ENCODE measurements at regions of chr5 and their contacts with region 1.

Region 1: GRCh38 chr5:138178516-138179276 is at the starts of genes BRD8 and KIF20A:
- DNase-seq: peak; percentile 91 to 94
- H3K4me3 ChIP-seq: peak within 1 kb of the TSS; percentile 83
- H3K27ac ChIP-seq: peak within 1 kb of the TSS; percentile 45
- H3K4me1 ChIP-seq: peaks cover 19% of the 10 kb centered on the region
- H3K27me3 ChIP-seq: no peaks in the 10 kb centered on the region
- CTCF ChIP-seq: no peak
- total RNA-seq, gene BRD8: 126 and 171 TPM in 2 replicates
- total RNA-seq, gene KIF20A: 63.6 and 88.6 TPM in 2 replicates

Region 2: DNA sequence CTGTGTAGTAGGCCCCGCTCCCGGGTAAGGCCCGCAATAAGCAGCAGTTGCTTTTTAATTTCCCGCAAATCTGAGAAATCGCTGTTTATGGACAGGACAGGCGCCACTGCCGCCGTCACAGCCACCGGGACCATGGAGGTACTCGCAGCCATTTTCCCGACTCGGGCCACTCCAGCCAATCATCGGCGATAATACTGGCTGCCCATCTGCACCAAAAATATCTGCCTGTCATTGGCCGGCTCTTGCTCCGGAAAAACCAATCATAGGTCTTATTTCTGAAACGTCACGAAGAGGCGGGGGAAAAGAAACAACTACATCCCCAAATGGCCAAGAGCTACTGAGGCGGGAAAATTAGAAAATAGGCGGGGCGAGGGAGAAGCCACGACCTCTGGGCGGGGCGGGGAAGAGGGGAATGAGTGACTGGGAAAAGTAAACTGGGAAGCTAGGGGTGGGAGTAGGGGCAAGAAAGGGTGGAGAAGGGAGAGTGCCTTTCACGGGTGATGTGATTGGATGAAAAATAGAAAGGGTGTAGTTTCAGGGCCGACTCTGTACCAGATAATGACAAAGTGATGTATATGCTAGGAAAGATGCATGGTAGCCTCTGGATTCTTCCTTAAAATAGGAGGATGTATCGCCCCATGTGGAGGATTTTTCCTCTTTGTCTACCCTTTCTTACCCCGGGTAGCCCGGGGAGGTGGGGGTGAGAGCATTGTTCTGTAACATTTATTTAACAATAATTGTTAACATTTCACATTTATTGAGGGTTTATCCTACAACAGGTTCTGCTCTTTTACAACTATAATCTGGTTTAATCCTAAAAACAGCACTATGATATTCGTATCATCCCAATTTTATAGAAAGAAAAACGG is 34.7 kb after region 1 on chr5 and contains the start of gene CDC23:
- CTCF ChIA-PET with region 1: no interaction called
- POLR2A ChIA-PET with region 1: interaction called, 5 read pairs
- intact Hi-C with region 1: loop called (anchors 2 kb)
- DNase-seq: peak; percentile 93 to 97
- H3K4me3 ChIP-seq: peak within 1 kb of the TSS; percentile 93
- H3K27ac ChIP-seq: no peak within 1 kb of the TSS
- H3K4me1 ChIP-seq: peaks cover 8% of the 10 kb centered on the region
- H3K27me3 ChIP-seq: no peaks in the 10 kb centered on the region
- CTCF ChIP-seq: no peak
- total RNA-seq, gene CDC23: 40.5 and 42.4 TPM in 2 replicates

Region 3: GRCh38 chr5:138229387-138229786 is 50.7 kb after region 1 on chr5:
- CTCF ChIA-PET with region 1: no interaction called
- POLR2A ChIA-PET with region 1: interaction called, 16 read pairs
- intact Hi-C with region 1: no loop called
- DNase-seq: no peak
- H3K4me3 ChIP-seq: no peak overlapping the region
- H3K27ac ChIP-seq: no peak overlapping the region
- H3K4me1 ChIP-seq: no peaks in the 10 kb centered on the region
- H3K27me3 ChIP-seq: no peaks in the 10 kb centered on the region
- CTCF ChIP-seq: no peak

Region 4: DNA sequence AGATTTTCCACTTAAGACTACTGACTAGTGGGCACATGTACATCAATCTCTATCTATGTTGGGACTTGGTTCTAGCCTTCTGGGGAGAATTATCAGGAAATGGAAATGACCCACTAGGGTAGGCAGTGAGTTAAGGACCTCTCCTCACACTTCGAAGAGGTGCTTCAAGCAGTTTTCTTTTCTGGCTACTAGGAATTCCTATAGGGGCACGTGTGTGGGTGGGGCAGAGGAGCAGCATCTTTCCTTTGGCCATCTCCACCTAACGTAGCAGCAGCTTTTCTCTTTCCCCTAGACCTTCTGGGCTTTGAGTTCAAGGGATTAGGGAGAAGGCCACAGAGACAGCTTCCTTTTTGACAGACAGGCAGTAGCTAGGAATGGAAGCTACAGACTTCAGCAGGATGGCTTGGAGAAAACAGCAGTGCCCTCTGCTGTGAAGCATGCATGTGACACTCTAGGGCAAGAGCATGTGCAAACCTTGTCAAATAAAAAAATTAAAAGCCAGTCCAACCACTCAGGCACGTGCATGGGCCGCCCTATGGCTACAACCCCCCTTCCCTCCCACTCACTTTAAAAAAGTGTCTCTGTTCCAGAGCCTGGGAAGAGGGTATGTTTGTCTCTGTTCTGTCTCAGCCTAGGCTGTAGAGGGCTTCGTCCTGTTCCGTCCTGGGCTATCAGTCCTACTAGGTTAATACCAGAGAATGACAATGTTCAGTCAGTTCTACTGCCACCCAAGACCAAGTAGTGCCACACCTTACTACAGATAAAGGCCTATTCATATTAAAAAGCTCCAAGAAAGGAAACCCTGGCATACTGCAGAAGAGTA is 104.4 kb after region 1 on chr5:
- CTCF ChIA-PET with region 1: no interaction called
- POLR2A ChIA-PET with region 1: no interaction called
- intact Hi-C with region 1: loop called (anchors 1 kb)
- DNase-seq: peak; percentile 43 to 50
- H3K4me3 ChIP-seq: no peak overlapping the region
- H3K27ac ChIP-seq: no peak overlapping the region
- H3K4me1 ChIP-seq: no peaks in the 10 kb centered on the region
- H3K27me3 ChIP-seq: no peaks in the 10 kb centered on the region
- CTCF ChIP-seq: peak; percentile 66

Region 5: DNA sequence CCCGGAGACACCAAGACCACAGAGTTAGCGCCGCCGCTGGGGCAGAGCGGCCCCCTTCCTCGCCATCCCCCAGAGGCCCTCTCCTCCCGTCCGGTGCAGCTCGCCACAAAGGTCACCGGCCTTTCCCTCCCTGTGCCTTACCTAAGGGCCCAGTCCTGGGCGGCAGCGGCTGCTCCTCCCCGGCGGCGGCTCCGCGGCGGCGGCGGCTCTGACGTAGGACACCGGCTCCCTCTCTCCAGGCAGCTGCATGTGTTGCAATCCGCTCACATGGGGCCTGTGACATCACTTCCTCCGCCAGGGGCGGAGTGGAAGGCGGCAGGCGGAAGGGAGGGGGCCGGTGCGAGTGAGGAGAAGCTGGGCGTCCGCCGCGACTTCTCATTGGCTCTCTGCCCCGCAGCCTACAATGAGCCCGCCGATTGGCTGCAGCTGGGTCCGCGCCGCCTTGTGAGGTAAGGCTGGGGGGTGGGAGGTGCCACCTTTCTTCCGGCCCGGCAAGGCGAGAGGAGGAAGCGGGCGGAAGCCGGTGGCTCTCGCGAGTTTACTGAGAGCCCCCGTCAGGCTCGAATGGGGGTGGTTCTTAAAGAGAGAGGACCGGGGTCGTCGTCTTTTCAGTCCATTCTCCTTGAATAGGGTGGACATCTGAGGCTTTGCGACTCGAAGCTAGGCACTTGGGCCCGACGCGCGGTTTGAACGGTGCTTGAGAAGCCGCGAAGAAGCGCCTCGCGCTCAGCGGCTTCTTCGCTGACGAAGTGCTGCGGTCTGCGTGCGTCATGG is 364.4 kb after region 1 on chr5 and contains the start of gene ETF1:
- CTCF ChIA-PET with region 1: no interaction called
- POLR2A ChIA-PET with region 1: no interaction called
- intact Hi-C with region 1: loop called (anchors 10 kb)
- DNase-seq: peak; percentile 96 to 99
- H3K4me3 ChIP-seq: peak within 1 kb of the TSS; percentile 66
- H3K27ac ChIP-seq: peak within 1 kb of the TSS; percentile 77
- H3K4me1 ChIP-seq: peaks cover 45% of the 10 kb centered on the region
- H3K27me3 ChIP-seq: no peaks in the 10 kb centered on the region
- CTCF ChIP-seq: no peak
- total RNA-seq, gene ETF1: 61.8 and 84.9 TPM in 2 replicates

Region 6: GRCh38 chr5:139593716-139594319 is 1415.1 kb after region 1 on chr5:
- CTCF ChIA-PET with region 1: interaction called, 10 read pairs
- POLR2A ChIA-PET with region 1: no interaction called
- intact Hi-C with region 1: no loop called
- DNase-seq: peak; percentile 30 to 71
- H3K4me3 ChIP-seq: no peak overlapping the region
- H3K27ac ChIP-seq: peak overlapping the region; percentile 30
- H3K4me1 ChIP-seq: peaks cover 15% of the 10 kb centered on the region
- H3K27me3 ChIP-seq: no peaks in the 10 kb centered on the region
- CTCF ChIP-seq: no peak